ENCODE measurements at regions of chr4 and their contacts with region 1.

Region 1: DNA sequence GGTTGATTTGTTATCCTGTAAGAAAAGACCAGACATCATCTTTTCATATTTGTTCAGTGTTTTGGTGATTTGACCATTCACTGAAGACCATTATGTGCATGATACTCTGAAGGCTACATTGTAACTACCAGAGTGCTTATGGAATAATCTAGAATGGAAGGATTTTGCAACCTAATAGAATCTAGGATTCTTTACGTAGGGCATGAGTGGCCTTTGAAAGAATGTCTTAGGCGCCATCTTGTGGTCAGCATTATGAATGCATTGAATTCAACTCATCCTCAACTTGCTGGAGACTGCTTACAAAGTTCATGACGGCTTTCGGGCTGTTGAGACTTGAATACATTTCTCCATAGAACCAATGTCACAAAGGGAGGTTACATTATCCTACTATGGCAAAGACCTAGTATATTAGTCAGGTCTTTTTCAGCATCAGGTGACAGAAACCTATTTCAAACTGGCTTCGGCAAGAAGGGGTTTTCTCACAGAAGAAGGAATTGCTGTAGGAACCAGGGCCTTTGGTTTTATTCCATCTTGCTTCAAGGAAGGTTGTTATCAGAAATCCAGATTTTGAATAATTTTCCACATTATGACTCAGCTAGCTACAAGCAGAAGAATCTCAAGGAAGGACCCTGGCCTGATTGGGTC is 104.1 kb downstream of the GPAT3 start:
- DNase-seq: peak; percentile 79 to 80
- H3K4me3 ChIP-seq: no peak overlapping the region
- H3K4me1 ChIP-seq: peaks cover 8% of the 10 kb centered on the region
- H3K27me3 ChIP-seq: no peaks in the 10 kb centered on the region

Region 2: DNA sequence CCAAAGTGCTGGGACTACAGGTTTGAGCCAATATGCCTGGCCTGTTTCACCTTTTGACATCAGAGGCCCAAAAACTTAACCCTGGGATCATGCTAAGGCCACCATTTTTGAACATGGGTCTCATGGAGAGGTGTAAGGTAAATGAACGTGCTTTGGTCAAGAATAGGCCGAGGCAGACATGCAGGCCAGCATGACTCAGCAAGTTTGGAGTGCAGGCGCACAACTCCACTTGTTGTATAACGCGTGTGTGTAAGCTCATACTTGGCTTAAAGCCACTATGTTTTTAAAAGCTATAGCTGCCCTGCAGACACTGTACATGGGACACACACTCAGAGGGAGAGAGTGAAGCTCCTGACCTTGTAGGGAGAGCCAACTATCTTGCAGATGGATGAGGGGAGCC is 261.6 kb before region 1 on chr4:
- in situ Hi-C with region 1: no loop called
- DNase-seq: peak in 1 of 2 experiments; percentile 43
- H3K4me3 ChIP-seq: no peak overlapping the region
- H3K4me1 ChIP-seq: 0 out of 2 replicates have a peak, but pooled peaks cover 2% of the 10 kb centered on the region
- H3K27me3 ChIP-seq: no peaks in the 10 kb centered on the region

Region 3: DNA sequence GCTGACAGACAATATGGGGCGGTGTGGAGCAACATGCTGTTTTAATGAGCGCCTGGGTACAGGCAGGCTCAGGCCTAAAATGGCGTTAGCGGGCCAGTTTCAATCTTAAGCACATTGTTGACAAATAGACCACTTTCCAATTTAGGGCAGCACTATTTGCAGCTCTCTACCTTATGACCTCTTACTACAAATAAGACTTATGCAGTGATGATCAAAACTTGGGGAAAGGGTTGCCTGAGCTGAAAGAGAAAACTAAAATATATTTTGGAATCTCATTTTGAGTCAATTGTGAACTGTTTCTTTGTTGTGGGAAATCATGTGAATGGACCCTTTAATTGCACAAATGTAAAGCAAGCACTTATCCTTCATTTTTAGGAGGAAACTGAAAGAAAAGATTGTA is 129.5 kb before region 1 on chr4:
- in situ Hi-C with region 1: loop called (anchors 5 kb)
- DNase-seq: no peak
- H3K4me3 ChIP-seq: no peak overlapping the region
- H3K4me1 ChIP-seq: no peaks in the 10 kb centered on the region
- H3K27me3 ChIP-seq: no peaks in the 10 kb centered on the region

Measured in HAP-1 (cell line).